ENCODE measurements at regions of chr9 and their contacts with region 1.

Region 1: DNA sequence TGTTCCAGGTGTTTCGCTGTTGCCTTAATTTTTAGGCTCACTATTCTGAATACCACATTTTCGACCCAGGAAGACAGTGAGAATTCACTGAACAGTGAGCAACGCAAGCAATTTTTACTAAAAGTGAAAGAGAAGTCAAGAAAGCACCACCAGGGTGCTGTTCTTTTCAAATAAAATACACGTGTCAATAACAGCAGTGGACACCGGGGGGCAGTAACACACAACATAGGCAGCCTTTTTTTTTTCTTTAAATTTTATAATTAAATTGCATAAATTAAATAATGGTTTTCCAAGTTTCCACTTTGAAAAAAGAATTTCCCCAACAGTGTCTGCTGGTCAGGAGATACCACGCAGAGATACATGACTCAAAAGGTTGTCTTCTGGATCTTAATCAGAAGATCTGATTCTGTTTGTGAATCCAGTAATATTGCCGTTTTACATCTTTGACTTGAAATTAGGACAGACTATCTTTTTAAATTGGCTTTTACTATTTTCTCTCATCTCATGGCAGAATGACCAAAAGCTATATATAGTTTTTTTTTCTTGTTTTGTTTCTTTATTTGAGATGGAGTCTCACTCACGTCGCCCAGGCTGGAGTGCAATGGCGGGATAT is 47.1 kb upstream of the SH3GL2 start:
- DNase-seq: no peak

Region 2: GRCh38 chr9:17342696-17343095 is 189.1 kb before region 1 on chr9:
- intact Hi-C with region 1: no loop called
- DNase-seq: no peak

Region 3: DNA sequence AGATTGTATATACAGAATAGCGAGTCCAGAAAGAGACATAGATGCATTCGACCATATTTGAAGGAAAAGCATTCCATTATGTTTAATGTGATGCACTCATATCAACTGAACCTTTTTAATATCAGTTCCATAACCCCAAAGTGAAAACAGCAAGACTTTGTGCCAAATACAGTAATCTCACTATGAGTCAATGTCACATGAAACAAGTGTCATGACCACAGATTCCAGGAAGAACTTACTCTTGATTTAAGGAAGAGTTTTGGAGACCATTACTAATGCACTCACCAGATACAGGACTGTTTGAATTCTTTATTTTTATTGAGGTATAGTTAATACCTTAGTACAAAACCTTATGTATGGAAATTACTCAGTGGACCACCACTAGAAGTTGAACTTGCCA is 267.6 kb after region 1 on chr9:
- intact Hi-C with region 1: loop called in 1 of 2 experiments (anchors 5 kb)
- DNase-seq: no peak

Region 4: GRCh38 chr9:18229992-18230676 is 698.4 kb after region 1 on chr9:
- intact Hi-C with region 1: loop called in 1 of 2 experiments (anchors 10 kb)
- DNase-seq: no peak